CD8-positive, alpha-beta T cell (primary cell): ENCODE measurements at regions of chr7 and their contacts with region 1.

Region 1: GRCh38 chr7:5396999-5397663 is 26.5 kb downstream of the TNRC18 start:
- DNase-seq: peak; percentile 81 to 99 (median 92)
- ATAC-seq: peak; percentile 91
- H3K4me3 ChIP-seq: peak overlapping the region; percentile 83 to 96
- H3K4me3 Mint-ChIP-seq: peak overlapping the region; percentile 82
- H3K27ac ChIP-seq: peak overlapping the region; percentile 84 to 95
- H3K27ac Mint-ChIP-seq: peak overlapping the region; percentile 81
- H3K4me1 ChIP-seq: peaks cover 31% of the 10 kb centered on the region
- H3K4me1 Mint-ChIP-seq: peaks cover 26% of the 10 kb centered on the region
- H3K27me3 ChIP-seq: no peaks in the 10 kb centered on the region
- H3K27me3 Mint-ChIP-seq: no peaks in the 10 kb centered on the region
- CTCF ChIP-seq: no peak

Region 2: GRCh38 chr7:5363729-5364128 is 33.4 kb before region 1 on chr7:
- CTCF ChIA-PET with region 1: interaction called, 19 read pairs
- POLR2A ChIA-PET with region 1: interaction called, 4 read pairs
- intact Hi-C with region 1: loop called in 1 of 2 experiments (anchors 2 kb)
- DNase-seq: no peak
- ATAC-seq: no peak
- H3K4me3 ChIP-seq: no peak overlapping the region
- H3K4me3 Mint-ChIP-seq: no peak overlapping the region
- H3K27ac ChIP-seq: no peak overlapping the region
- H3K27ac Mint-ChIP-seq: no peak overlapping the region
- H3K4me1 ChIP-seq: no peaks in the 10 kb centered on the region
- H3K4me1 Mint-ChIP-seq: peaks cover 20% of the 10 kb centered on the region
- H3K27me3 ChIP-seq: no peaks in the 10 kb centered on the region
- H3K27me3 Mint-ChIP-seq: no peaks in the 10 kb centered on the region
- CTCF ChIP-seq: no peak

Region 3: DNA sequence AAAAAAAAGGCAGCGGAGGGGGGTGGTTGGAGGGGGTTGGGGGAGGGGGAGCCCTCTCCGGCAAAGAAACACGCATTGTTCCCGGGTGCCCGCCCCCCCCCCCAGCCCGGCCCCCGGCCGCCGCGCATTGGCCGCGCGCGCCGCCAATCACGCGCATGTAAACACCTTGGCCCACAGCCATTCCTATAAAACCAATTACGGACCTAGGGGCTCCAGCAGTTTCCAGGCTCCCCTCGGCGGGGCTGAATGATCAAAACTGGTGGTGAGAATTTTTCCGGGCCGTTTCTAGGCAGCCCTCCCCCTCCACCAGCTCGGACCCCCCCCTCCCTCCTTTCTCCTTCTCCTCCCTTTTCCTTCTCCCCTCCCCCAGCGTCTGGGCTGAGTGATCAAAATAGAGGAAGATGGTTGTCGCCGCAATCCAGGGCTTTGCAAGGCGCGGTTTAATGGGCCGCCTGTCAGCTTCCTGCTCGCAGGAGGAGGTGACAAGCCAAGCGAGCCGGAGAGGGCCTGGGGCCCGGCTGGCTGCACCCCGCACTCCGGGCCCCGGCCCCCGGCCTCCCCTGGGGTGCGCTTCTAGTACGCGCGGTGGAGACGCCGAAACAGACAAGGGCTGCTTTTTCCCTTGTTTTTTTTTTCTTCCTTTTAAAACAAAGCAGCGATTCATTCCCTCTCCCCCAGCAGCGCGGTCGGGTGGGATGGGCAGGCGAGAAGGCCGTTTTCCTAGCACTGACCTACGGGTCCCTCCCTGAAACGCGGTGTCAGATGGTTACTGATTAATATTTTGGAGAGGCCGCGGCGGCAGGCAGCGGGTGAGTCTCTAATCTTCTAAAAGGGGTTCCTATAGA is 26.9 kb after region 1 on chr7:
- CTCF ChIA-PET with region 1: interaction called, 3 read pairs
- POLR2A ChIA-PET with region 1: interaction called, 4 read pairs
- intact Hi-C with region 1: loop called (anchors 1 to 2 kb)
- DNase-seq: peak in 5 of 9 experiments; percentile 44 to 73 (median 50)
- ATAC-seq: peak; percentile 47
- H3K4me3 ChIP-seq: peak overlapping the region in 1 of 2 experiments; percentile 33
- H3K4me3 Mint-ChIP-seq: peak overlapping the region; percentile 76
- H3K27ac ChIP-seq: no peak overlapping the region
- H3K27ac Mint-ChIP-seq: no peak overlapping the region
- H3K4me1 ChIP-seq: peaks cover 79% of the 10 kb centered on the region
- H3K4me1 Mint-ChIP-seq: peaks cover 50% of the 10 kb centered on the region
- H3K27me3 ChIP-seq: peaks cover 64 to 82% of the 10 kb centered on the region in 2 experiments
- H3K27me3 Mint-ChIP-seq: peaks cover 56% of the 10 kb centered on the region
- CTCF ChIP-seq: no peak

Region 4: GRCh38 chr7:5450549-5451372 is 53.6 kb after region 1 on chr7:
- CTCF ChIA-PET with region 1: interaction called, 15 read pairs
- POLR2A ChIA-PET with region 1: no interaction called
- intact Hi-C with region 1: loop called (anchors 1 kb)
- DNase-seq: peak in 8 of 9 experiments; percentile 19 to 67 (median 51)
- ATAC-seq: peak; percentile 79
- H3K4me3 ChIP-seq: no peak overlapping the region
- H3K4me3 Mint-ChIP-seq: no peak overlapping the region
- H3K27ac ChIP-seq: no peak overlapping the region
- H3K27ac Mint-ChIP-seq: no peak overlapping the region
- H3K4me1 ChIP-seq: no peaks in the 10 kb centered on the region
- H3K4me1 Mint-ChIP-seq: no peaks in the 10 kb centered on the region
- H3K27me3 ChIP-seq: no peaks in the 10 kb centered on the region
- H3K27me3 Mint-ChIP-seq: peaks cover 2% of the 10 kb centered on the region
- CTCF ChIP-seq: peak; percentile 39

Region 5: GRCh38 chr7:6623589-6624245 is 1226.6 kb after region 1 on chr7:
- CTCF ChIA-PET with region 1: no interaction called
- POLR2A ChIA-PET with region 1: no interaction called
- intact Hi-C with region 1: no loop called
- DNase-seq: peak in 6 of 9 experiments; percentile 13 to 68 (median 44)
- ATAC-seq: peak; percentile 48
- H3K4me3 ChIP-seq: peak overlapping the region; percentile 0 to 20
- H3K4me3 Mint-ChIP-seq: peak overlapping the region; percentile 72
- H3K27ac ChIP-seq: peak overlapping the region; percentile 31 to 61
- H3K27ac Mint-ChIP-seq: peak overlapping the region; percentile 86
- H3K4me1 ChIP-seq: peaks cover 53% of the 10 kb centered on the region
- H3K4me1 Mint-ChIP-seq: peaks cover 50% of the 10 kb centered on the region
- H3K27me3 ChIP-seq: no peaks in the 10 kb centered on the region
- H3K27me3 Mint-ChIP-seq: no peaks in the 10 kb centered on the region
- CTCF ChIP-seq: no peak